ENCODE measurements at regions of chr11 and their contacts with region 1.

Region 1: DNA sequence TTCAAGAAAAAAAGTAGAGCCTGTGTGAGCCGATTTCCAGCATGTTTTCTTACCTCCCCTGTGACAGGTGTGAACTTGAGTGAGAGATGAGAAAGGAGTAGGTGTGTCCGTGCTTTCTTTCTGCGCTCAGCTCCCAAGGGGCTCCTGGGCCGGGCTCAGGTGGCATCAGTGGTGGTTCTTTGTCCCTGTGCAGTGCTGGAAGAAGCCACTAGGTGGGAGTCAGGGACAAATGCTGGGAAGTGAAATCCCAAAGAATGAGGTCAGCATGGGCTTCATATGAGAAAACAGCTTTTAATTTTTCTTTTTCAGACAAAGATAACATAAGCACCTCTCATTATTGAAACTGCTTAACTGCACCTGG is 57.8 kb downstream of the PPFIBP2 start:
- DNase-seq: peak; percentile 76
- H3K4me3 ChIP-seq: no peak overlapping the region
- H3K27ac ChIP-seq: peak overlapping the region; percentile 51 to 68
- H3K4me1 ChIP-seq: peaks cover 38% of the 10 kb centered on the region
- H3K27me3 ChIP-seq: no peaks in the 10 kb centered on the region
- CTCF ChIP-seq: peak; percentile 85 to 96 (median 92)
- POLR2A ChIP-seq: no peak

Region 2: GRCh38 chr11:7115780-7116179 is 455.8 kb before region 1 on chr11:
- intact Hi-C with region 1: no loop called
- DNase-seq: no peak
- H3K4me3 ChIP-seq: no peak overlapping the region
- H3K27ac ChIP-seq: no peak overlapping the region
- H3K4me1 ChIP-seq: no peaks in the 10 kb centered on the region
- H3K27me3 ChIP-seq: no peaks in the 10 kb centered on the region
- CTCF ChIP-seq: no peak
- POLR2A ChIP-seq: no peak

Region 3: GRCh38 chr11:7513234-7514098 is 58.2 kb before region 1 on chr11 and contains the start of gene PPFIBP2:
- intact Hi-C with region 1: loop called (anchors 5 kb)
- DNase-seq: peak; percentile 94
- H3K4me3 ChIP-seq: peak within 1 kb of the TSS; percentile 65 to 82
- H3K27ac ChIP-seq: peak within 1 kb of the TSS; percentile 86 to 91
- H3K4me1 ChIP-seq: peaks cover 17% of the 10 kb centered on the region
- H3K27me3 ChIP-seq: no peaks in the 10 kb centered on the region
- CTCF ChIP-seq: peak; percentile 17 to 82 (median 69)
- POLR2A ChIP-seq: peak; percentile 85
- total RNA-seq, gene PPFIBP2: 76.3 to 88.3 TPM

Region 4: GRCh38 chr11:7657306-7658025 is 85.8 kb after region 1 on chr11:
- intact Hi-C with region 1: loop called (anchors 2 kb)
- DNase-seq: peak; percentile 56
- H3K4me3 ChIP-seq: no peak overlapping the region
- H3K27ac ChIP-seq: no peak overlapping the region
- H3K4me1 ChIP-seq: no peaks in the 10 kb centered on the region
- H3K27me3 ChIP-seq: no peaks in the 10 kb centered on the region
- CTCF ChIP-seq: peak in 3 of 4 experiments; percentile 35 to 66 (median 60)
- POLR2A ChIP-seq: no peak

Region 5: GRCh38 chr11:7688238-7688826 is 116.7 kb after region 1 on chr11:
- intact Hi-C with region 1: loop called (anchors 2 kb)
- DNase-seq: no peak
- H3K4me3 ChIP-seq: no peak overlapping the region
- H3K27ac ChIP-seq: no peak overlapping the region
- H3K4me1 ChIP-seq: no peaks in the 10 kb centered on the region
- H3K27me3 ChIP-seq: no peaks in the 10 kb centered on the region
- CTCF ChIP-seq: peak; percentile 41 to 81 (median 73)
- POLR2A ChIP-seq: no peak